ENCODE measurements at regions of chr18 and their contacts with region 1.

Region 1: DNA sequence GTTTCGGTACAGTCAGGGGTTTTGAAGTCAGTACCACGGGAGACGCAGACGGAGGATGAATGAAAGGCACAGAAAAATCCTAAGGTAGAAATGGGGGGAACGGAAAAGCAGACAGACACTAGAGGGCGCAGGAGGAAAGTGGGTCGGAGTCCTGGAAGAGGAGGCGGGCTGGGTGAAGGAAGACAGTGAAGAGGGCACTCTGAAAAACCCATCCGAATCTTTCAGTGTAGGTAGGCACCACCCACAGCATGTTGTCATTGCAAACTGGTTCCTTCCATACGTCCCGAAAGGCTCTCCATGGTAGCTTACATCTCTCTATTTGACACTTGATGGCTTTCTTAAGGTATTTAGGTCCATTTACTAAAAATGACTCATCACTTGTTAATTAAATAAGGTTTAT is 18.5 kb upstream of the ZNF236 start:
- DNase-seq: no peak
- H3K4me3 ChIP-seq: no peak overlapping the region
- CTCF ChIP-seq: peak; percentile 87

Region 2: GRCh38 chr18:76783759-76784484 is 19.9 kb before region 1 on chr18:
- CTCF ChIA-PET with region 1: interaction called, 85 read pairs
- POLR2A ChIA-PET with region 1: interaction called, 4 read pairs
- DNase-seq: no peak
- H3K4me3 ChIP-seq: no peak overlapping the region
- CTCF ChIP-seq: no peak

Region 3: GRCh38 chr18:76835380-76835779 is 31.6 kb after region 1 on chr18:
- CTCF ChIA-PET with region 1: interaction called, 10 read pairs
- POLR2A ChIA-PET with region 1: no interaction called
- DNase-seq: no peak
- H3K4me3 ChIP-seq: no peak overlapping the region
- CTCF ChIP-seq: no peak

Region 4: DNA sequence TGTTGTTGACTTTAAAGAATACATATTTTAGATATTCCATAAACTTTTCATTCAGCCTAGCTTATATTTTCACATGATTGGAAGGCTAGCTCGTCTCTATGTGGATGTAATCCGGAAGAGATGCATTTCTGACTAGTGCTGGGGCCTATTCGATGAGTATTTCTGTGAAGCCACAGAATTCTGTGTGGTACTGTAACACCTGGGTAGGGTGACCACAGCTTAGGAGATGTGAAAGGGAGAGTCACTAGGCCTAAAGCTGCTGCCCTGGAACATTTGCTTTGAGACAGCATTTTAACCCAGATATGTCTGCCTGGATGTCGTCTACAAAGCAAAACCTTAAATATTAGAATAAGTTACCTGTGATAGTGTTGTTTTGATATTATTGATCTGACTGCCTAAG is 102.0 kb after region 1 on chr18:
- CTCF ChIA-PET with region 1: interaction called, 14 read pairs
- POLR2A ChIA-PET with region 1: no interaction called
- DNase-seq: no peak
- H3K4me3 ChIP-seq: no peak overlapping the region
- CTCF ChIP-seq: no peak

Region 5: GRCh38 chr18:76937597-76937996 is 133.8 kb after region 1 on chr18:
- CTCF ChIA-PET with region 1: interaction called, 22 read pairs
- POLR2A ChIA-PET with region 1: no interaction called
- DNase-seq: peak; percentile 7
- H3K4me3 ChIP-seq: no peak overlapping the region
- CTCF ChIP-seq: peak; percentile 23

Region 6: GRCh38 chr18:77000527-77000926 is 196.7 kb after region 1 on chr18:
- CTCF ChIA-PET with region 1: interaction called, 10 read pairs
- POLR2A ChIA-PET with region 1: no interaction called
- DNase-seq: no peak
- H3K4me3 ChIP-seq: peak overlapping the region; percentile 10
- CTCF ChIP-seq: peak; percentile 86

Measured in AG04449 (cell line).